Activated CD8-positive, alpha-beta T cell treated with anti-CD3 and anti-CD28 coated beads, Interleukin-2, amount 10 ng/mL, durations not matched to agents 7 days and 5 days (primary cell): ENCODE measurements at regions of chr9 and their contacts with region 1.

Region 1: GRCh38 chr9:91422758-91423711 is 597 bp downstream of the NFIL3 start:
- DNase-seq: peak; percentile 77
- ATAC-seq: peak; percentile 44
- H3K4me3 Mint-ChIP-seq: peak overlapping the region; percentile 96
- H3K27ac Mint-ChIP-seq: peak overlapping the region; percentile 89
- H3K4me1 Mint-ChIP-seq: peaks cover 62% of the 10 kb centered on the region
- H3K27me3 Mint-ChIP-seq: no peaks in the 10 kb centered on the region

Region 2: DNA sequence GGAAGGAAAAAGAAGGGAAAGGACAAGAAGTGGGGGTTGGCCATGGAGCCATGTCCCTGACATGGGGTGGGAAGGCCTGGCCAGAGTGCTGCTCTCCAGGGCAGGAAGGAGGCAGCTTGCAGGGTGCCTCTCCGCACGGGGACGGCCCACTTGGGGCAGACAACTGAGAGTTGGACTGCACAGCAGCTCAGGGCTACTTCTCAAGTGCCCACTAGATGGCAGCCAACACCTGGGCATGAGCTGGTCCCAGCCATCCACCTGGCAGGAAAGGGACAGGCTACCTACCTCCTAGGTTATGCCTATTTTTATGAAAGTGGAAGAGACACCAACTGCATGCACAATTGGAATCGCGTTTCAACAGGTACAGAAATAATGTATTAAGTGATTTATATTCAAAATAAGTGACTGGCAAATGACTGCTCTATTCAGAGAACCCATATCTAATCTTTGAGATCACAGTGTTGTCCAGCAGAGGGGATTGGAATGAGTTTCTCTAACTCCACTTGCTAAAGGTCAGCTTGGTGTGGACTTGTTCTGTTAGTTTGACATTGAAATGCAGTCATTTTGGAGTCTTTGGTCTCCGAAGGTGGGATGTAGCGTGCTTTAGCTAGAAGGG is 508.1 kb before region 1 on chr9:
- CTCF ChIA-PET with region 1: interaction called, 244 read pairs
- POLR2A ChIA-PET with region 1: interaction called, 5 read pairs
- DNase-seq: peak; percentile 83
- ATAC-seq: peak; percentile 99
- H3K4me3 Mint-ChIP-seq: no peak overlapping the region
- H3K27ac Mint-ChIP-seq: no peak overlapping the region
- H3K4me1 Mint-ChIP-seq: peaks cover 4% of the 10 kb centered on the region
- H3K27me3 Mint-ChIP-seq: no peaks in the 10 kb centered on the region

Region 3: GRCh38 chr9:91036826-91037510 is 386.1 kb before region 1 on chr9:
- CTCF ChIA-PET with region 1: interaction called, 80 read pairs
- POLR2A ChIA-PET with region 1: interaction called, 5 read pairs
- DNase-seq: peak; percentile 87
- ATAC-seq: peak; percentile 96
- H3K4me3 Mint-ChIP-seq: peak overlapping the region; percentile 33
- H3K27ac Mint-ChIP-seq: peak overlapping the region; percentile 74
- H3K4me1 Mint-ChIP-seq: peaks cover 69% of the 10 kb centered on the region
- H3K27me3 Mint-ChIP-seq: peaks cover under 1% of the 10 kb centered on the region

Region 4: GRCh38 chr9:91150998-91151717 is 271.9 kb before region 1 on chr9:
- CTCF ChIA-PET with region 1: interaction called, 9 read pairs
- POLR2A ChIA-PET with region 1: interaction called, 18 read pairs
- DNase-seq: peak; percentile 76
- ATAC-seq: peak; percentile 86
- H3K4me3 Mint-ChIP-seq: peak overlapping the region; percentile 53
- H3K27ac Mint-ChIP-seq: peak overlapping the region; percentile 95
- H3K4me1 Mint-ChIP-seq: peaks cover 93% of the 10 kb centered on the region
- H3K27me3 Mint-ChIP-seq: no peaks in the 10 kb centered on the region

Region 5: DNA sequence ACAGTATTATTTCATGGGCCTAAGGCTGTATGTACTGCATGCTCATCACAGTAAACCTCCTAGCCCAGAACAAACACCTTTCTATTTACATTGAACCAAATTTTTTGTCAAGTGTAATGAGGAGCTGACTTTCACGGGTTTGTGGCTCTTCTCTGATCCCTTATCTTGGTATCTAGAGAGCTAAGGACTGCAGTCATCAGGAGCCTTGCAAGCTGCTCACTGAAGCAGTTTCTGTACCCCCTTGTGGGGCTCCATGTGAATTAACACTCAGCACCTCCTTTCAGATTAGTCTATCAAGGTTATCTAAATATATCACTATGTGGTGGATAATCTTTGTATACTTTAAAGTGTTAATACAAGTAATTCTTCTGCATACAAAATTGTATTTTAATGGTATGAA is 169.5 kb before region 1 on chr9:
- CTCF ChIA-PET with region 1: interaction called, 14 read pairs
- POLR2A ChIA-PET with region 1: no interaction called
- DNase-seq: peak; percentile 74
- ATAC-seq: peak; percentile 99
- H3K4me3 Mint-ChIP-seq: no peak overlapping the region
- H3K27ac Mint-ChIP-seq: no peak overlapping the region
- H3K4me1 Mint-ChIP-seq: peaks cover 48% of the 10 kb centered on the region
- H3K27me3 Mint-ChIP-seq: no peaks in the 10 kb centered on the region

Region 6: DNA sequence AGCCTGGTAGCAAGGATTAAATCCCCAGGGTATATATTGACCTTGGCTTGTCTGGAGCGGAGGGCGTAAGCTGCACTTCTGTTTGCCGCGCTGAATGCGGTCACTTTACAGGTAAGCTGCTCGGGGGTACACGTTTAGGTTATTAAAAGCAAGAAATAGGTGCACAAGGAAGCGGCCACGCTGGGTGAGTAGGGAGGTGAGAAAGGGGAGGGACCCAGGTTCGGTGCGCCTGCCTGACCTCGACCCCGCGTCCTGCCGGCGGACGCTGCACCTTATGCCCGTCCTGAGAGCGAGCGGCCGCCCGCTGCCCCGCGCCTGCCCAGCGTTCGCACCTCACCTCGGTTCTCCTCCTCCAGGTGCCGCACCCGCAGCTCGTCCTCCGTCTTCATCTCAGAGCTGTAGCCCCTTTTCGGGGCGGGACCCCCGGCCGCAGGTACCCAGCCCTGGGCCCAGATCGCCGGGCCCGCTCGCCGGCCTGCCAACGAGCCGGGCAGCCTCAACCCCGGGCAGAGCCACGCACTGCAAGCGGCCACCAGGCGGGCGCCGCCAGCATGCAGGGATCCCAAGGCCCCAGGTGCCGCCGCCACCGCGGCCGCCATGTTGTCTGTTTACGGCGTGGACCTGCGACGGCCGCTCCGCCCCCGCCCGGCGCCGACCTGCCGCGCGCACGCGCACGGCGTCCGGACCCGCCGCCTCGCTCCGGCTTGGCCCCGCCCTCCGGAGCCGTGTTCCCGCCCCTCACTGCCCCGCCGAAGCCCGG is 61.6 kb before region 1 on chr9 and contains the start of gene AUH:
- CTCF ChIA-PET with region 1: interaction called, 81 read pairs
- POLR2A ChIA-PET with region 1: interaction called, 43 read pairs
- DNase-seq: peak; percentile 88
- ATAC-seq: peak; percentile 96
- H3K4me3 Mint-ChIP-seq: peak within 1 kb of the TSS; percentile 97
- H3K27ac Mint-ChIP-seq: peak within 1 kb of the TSS; percentile 94
- H3K4me1 Mint-ChIP-seq: peaks cover 49% of the 10 kb centered on the region
- H3K27me3 Mint-ChIP-seq: no peaks in the 10 kb centered on the region
- total RNA-seq, gene AUH: 15.5 to 15.6 TPM

Region 7: DNA sequence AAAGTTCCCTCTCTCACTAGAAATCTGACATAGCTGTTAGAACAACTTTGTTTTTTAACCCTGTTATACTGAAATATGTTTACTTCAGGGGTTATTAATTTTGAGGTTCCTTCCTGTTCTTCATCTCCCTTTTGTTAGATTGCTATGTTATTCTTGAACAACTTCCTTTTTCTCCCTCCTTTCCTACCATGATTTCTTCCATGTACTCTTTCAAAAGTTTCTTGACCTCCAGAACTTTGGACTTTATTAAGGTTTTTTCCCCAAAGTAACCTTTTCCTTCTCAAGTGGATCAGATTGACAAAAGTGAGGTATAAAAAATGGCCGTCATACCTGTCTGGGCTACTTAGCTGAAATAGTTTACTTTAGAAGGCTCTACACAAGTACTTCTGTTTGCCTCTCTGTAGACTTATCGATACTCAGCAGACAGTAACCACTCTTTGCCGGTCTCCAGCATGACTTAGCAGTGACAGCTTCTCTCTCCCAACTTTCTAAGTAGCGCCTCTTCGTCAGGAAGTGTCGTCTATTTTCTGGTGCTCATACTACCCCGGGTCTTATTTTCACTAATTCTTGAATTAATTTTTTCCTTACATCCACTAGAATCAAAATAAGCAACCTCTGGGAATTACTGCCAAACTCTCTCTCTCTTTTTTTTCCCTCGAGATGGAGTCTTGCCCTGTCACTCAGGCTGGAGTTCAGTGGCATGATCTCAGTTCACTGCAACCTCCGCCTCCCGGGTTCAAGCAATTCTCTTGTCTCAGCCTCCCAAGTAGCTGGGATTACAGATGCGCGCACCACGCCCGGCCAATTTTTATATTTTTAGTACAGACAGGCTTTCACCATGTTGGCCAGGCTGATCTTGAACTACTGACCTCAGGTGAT is 19.1 kb before region 1 on chr9:
- CTCF ChIA-PET with region 1: no interaction called
- POLR2A ChIA-PET with region 1: no interaction called
- DNase-seq: no peak
- ATAC-seq: no peak
- H3K4me3 Mint-ChIP-seq: no peak overlapping the region
- H3K27ac Mint-ChIP-seq: peak overlapping the region; percentile 39
- H3K4me1 Mint-ChIP-seq: peaks cover 17% of the 10 kb centered on the region
- H3K27me3 Mint-ChIP-seq: no peaks in the 10 kb centered on the region